Heart left ventricle (tissue), 16 donors: ENCODE measurements at regions of chr9 and their contacts with region 1.

Region 1: GRCh38 chr9:97921959-97922724 is at the start of gene TRMO:
- DNase-seq: peak; percentile 97 to 99 (median 98)
- ATAC-seq: peak; percentile 96 to 97 (median 97)
- H3K4me3 ChIP-seq: peak within 1 kb of the TSS; percentile 20 to 76 (median 62)
- H3K27ac ChIP-seq: peak within 1 kb of the TSS; percentile 87 to 99 (median 96)
- H3K4me1 ChIP-seq: peaks cover 0 to 51% (median 15%) of the 10 kb centered on the region in 12 donors
- H3K27me3 ChIP-seq: peaks cover 0 to 15% (median 0%) of the 10 kb centered on the region in 9 donors
- CTCF ChIP-seq: peak; percentile 49 to 93 (median 78)
- POLR2A ChIP-seq: peak; percentile 44 to 68
- total RNA-seq, gene TRMO: 5.2 to 23.3 (median 8.0) TPM

Region 2: GRCh38 chr9:97773723-97774122 is 148.4 kb before region 1 on chr9:
- intact Hi-C with region 1: no loop called
- DNase-seq: peak in 2 of 5 donors; percentile 35 to 39
- ATAC-seq: peak in 3 of 4 donors; percentile 27 to 56 (median 50)
- H3K4me3 ChIP-seq: no peak overlapping the region
- H3K27ac ChIP-seq: no peak overlapping the region
- H3K4me1 ChIP-seq: peaks cover 0 to 4% (median 0%) of the 10 kb centered on the region in 12 donors
- H3K27me3 ChIP-seq: peaks cover 0 to 44% (median 1%) of the 10 kb centered on the region in 9 donors
- CTCF ChIP-seq: no peak
- POLR2A ChIP-seq: no peak

Region 3: DNA sequence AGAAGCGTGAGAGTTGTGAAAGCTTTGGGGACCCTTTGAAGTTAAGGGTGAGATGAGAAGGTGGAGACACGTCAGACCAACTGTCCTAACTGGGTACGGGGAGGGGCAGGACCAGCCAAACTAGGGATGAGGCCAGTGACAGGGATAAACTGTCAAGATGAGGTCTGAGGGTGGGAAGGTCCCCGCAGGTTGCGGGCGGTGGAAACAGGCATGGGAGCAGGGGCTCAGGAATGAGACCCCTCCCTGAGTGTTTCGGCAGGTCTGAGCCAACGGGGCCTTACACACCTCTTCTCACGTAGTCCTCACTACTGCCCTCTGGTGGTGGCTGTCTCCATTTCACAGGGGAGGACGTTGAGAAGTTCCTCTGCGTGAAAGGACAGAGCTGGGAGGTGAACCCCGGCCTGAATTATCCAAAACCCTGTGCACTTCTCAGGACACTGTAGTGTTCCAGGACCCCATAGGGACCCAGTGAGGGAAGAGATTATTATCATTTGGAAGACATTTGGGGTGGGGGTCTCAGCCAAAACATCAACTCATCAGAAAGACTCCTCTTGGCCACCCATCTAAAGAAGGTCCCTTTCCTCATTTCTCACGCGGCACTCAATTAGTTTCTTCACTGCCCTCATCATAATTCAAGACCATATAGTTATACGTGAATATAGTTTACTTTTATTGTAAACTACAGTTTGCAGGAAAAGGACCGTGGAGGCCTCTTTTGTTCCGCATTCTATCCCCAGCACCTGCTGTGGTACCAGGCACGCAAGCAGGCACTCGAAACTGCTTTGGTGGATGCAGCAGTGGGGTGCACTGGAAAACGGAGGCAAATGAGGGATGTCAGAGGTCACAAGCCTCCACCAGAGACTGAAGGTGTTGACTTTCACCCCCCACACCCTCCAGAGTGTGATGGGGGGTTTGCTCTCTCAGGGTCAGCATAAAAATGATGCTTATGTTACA is 112.7 kb after region 1 on chr9:
- intact Hi-C with region 1: loop called (anchors 1 to 5 kb)
- DNase-seq: peak; percentile 81 to 88 (median 83)
- ATAC-seq: peak; percentile 70 to 91 (median 88)
- H3K4me3 ChIP-seq: peak overlapping the region in 6 of 12 donors; percentile 15 to 31 (median 30)
- H3K27ac ChIP-seq: no peak overlapping the region
- H3K4me1 ChIP-seq: peaks cover 0 to 22% (median 13%) of the 10 kb centered on the region in 12 donors
- H3K27me3 ChIP-seq: no peaks in the 10 kb centered on the region
- CTCF ChIP-seq: peak; percentile 72 to 92 (median 86)
- POLR2A ChIP-seq: no peak

Region 4: GRCh38 chr9:98056269-98057137 is 134.4 kb after region 1 on chr9 and contains the start of gene NANS:
- intact Hi-C with region 1: loop called in 1 of 10 experiments (anchors 2 kb)
- DNase-seq: peak; percentile 94 to 96 (median 95)
- ATAC-seq: peak; percentile 97 to 99 (median 99)
- H3K4me3 ChIP-seq: peak within 1 kb of the TSS; percentile 64 to 98 (median 80)
- H3K27ac ChIP-seq: peak within 1 kb of the TSS; percentile 79 to 97 (median 90)
- H3K4me1 ChIP-seq: peaks cover 0 to 32% (median 10%) of the 10 kb centered on the region in 12 donors
- H3K27me3 ChIP-seq: no peaks in the 10 kb centered on the region
- CTCF ChIP-seq: peak in 1 of 12 donors; percentile 9
- POLR2A ChIP-seq: peak; percentile 97 to 98
- total RNA-seq, gene NANS: 24.3 to 59.0 (median 33.7) TPM

Region 5: GRCh38 chr9:98207606-98208005 is 285.5 kb after region 1 on chr9:
- intact Hi-C with region 1: loop called in 1 of 10 experiments (anchors 10 kb)
- DNase-seq: no peak
- ATAC-seq: no peak
- H3K4me3 ChIP-seq: no peak overlapping the region
- H3K27ac ChIP-seq: no peak overlapping the region
- H3K4me1 ChIP-seq: peaks cover 0 to 9% (median 1%) of the 10 kb centered on the region in 12 donors
- H3K27me3 ChIP-seq: no peaks in the 10 kb centered on the region
- CTCF ChIP-seq: no peak
- POLR2A ChIP-seq: no peak

Region 6: DNA sequence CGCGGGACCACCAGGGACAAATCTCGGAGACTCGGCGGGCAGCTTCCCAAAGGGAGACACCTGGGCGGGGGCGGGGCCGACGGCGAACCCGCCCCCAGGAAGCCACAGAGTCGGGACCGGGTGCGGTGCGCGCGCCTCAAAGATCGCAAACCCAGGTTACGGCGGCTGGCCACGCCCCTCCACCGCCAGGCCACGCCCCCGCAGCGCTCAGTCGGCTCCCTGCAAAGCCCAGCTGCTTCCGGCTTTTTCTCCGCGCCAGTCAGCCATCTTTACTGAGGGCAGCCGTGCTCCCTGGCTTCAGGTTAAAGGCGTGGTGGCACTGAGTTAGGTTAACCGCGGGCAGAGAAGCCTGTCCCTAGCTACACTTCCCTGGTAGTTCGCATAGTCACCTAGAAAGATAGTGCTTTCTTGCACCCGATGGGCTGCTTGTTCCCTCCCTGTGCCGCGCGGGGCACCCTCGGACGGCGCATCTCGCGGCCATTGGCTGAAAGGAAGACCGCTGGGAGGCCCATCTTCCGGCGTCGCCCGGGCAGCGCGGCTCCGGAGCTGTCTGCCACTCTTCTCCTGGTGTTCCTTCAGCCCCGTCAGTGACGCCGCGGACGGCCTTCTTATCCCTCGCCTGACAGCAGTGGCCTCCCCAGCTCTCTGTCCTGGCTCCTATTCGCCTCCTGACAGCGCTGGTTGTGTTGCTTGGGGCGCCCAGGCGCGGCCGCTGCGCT is 333.6 kb after region 1 on chr9 and contains the start of gene TBC1D2:
- intact Hi-C with region 1: loop called in 4 of 10 experiments (anchors 2 to 5 kb)
- DNase-seq: peak; percentile 95 to 98 (median 95)
- ATAC-seq: peak; percentile 95 to 98 (median 98)
- H3K4me3 ChIP-seq: peak within 1 kb of the TSS; percentile 58 to 97 (median 76)
- H3K27ac ChIP-seq: peak within 1 kb of the TSS; percentile 82 to 98 (median 94)
- H3K4me1 ChIP-seq: peaks cover 0 to 49% (median 15%) of the 10 kb centered on the region in 12 donors
- H3K27me3 ChIP-seq: no peaks in the 10 kb centered on the region
- CTCF ChIP-seq: peak in 6 of 12 donors; percentile 2 to 42 (median 12)
- POLR2A ChIP-seq: no peak
- total RNA-seq, gene TBC1D2: 1.1 to 9.4 (median 2.2) TPM

Region 7: DNA sequence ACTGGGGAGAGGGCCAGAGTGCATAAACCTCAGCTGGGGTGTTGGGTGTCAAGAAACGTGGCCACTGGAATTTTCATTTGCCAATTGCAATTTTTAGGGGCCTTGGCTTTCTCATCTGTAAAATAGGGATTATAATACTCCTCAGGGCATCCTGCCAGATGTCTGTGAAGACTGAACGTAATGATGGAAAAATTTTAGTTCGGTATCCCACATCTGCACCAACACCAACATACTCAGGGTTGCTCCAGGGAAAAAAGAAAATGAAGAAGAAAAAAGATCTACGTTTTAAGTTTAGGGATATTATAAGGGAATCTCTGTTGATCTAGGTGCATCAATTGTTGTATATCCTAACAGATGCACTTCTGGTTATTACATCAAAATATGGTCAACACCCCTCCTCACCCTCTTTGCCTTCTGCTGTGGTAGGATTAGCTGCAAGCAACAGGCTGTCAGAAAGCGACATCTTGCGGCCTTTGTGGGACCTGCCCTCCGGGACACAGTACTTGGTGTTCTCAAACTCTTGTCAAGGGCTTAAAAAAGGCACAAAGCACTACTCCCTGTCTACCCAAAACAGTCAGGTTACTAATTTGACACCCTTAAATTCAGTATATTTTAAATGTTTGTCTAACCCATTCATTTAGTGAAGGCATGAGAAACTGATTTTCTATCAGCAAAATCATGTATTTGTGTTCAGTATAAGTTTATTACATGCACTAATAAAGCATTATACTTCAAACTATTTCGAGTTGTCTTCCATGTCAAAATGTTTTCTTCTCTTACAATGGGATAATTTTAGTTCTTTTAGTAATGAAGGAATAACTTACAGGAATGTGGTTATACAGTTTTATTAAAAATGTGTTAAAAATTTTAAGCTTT is 341.6 kb after region 1 on chr9:
- intact Hi-C with region 1: loop called in 8 of 10 experiments (anchors 1 to 5 kb)
- DNase-seq: peak; percentile 73 to 88 (median 82)
- ATAC-seq: peak; percentile 77 to 96 (median 94)
- H3K4me3 ChIP-seq: no peak overlapping the region
- H3K27ac ChIP-seq: no peak overlapping the region
- H3K4me1 ChIP-seq: no peaks in the 10 kb centered on the region
- H3K27me3 ChIP-seq: peaks cover 0 to 2% (median 0%) of the 10 kb centered on the region in 9 donors
- CTCF ChIP-seq: peak; percentile 77 to 97 (median 91)
- POLR2A ChIP-seq: no peak